ENCODE measurements at regions of chr1 and their contacts with region 1.

Region 1: DNA sequence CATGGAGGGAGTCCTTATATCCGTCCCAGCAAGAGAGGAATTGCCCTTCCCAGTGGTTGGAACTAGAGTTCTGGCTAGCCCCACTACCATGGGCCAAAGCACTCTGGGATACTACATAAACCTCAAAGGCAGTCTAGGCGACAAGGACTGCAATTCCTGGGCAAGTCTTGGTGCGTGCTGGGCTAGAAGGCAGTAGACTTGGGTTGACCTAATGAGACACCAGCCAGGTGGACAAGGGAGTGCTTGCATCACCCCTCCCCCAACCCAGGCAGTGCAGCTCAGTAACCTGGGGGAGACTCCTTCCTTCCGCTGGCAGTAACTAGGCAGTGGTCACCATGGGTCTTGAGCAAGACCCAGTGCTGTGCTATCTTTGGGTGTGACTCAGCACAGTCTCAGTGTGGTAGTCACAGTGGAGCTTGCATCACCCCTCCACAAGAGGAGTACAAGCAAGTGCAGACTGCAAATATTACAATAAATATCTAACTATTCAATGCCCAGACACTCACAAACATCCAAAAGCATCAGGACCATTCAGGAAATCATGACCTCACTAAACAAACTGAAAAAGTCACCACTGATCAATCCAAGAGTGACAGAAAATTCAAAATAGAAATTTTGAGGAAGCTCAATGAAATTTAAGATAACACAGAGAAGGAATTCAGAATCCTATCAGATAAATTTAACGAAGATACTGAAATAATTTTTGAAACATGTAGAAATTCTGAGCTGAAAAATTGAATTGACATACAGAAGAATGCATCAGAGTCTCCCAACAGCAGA is 84.7 kb upstream of the LYPLAL1 start:
- DNase-seq: peak in 1 of 9 experiments; percentile 38
- ATAC-seq: no peak
- H3K4me3 ChIP-seq: no peak overlapping the region
- H3K4me3 Mint-ChIP-seq: no peak overlapping the region
- H3K27ac ChIP-seq: no peak overlapping the region
- H3K27ac Mint-ChIP-seq: no peak overlapping the region
- H3K4me1 ChIP-seq: no peaks in the 10 kb centered on the region
- H3K4me1 Mint-ChIP-seq: no peaks in the 10 kb centered on the region
- H3K27me3 ChIP-seq: no peaks in the 10 kb centered on the region
- H3K27me3 Mint-ChIP-seq: peaks cover 5% of the 10 kb centered on the region
- CTCF ChIP-seq: no peak

Region 2: GRCh38 chr1:219060798-219061197 is 28.2 kb before region 1 on chr1:
- CTCF ChIA-PET with region 1: no interaction called
- POLR2A ChIA-PET with region 1: no interaction called
- intact Hi-C with region 1: loop called (anchors 1 kb)
- DNase-seq: no peak
- ATAC-seq: no peak
- H3K4me3 ChIP-seq: no peak overlapping the region
- H3K4me3 Mint-ChIP-seq: no peak overlapping the region
- H3K27ac ChIP-seq: no peak overlapping the region
- H3K27ac Mint-ChIP-seq: no peak overlapping the region
- H3K4me1 ChIP-seq: no peaks in the 10 kb centered on the region
- H3K4me1 Mint-ChIP-seq: no peaks in the 10 kb centered on the region
- H3K27me3 ChIP-seq: no peaks in the 10 kb centered on the region
- H3K27me3 Mint-ChIP-seq: no peaks in the 10 kb centered on the region
- CTCF ChIP-seq: no peak